ENCODE measurements at regions of chr9 and their contacts with region 1.

Region 1: DNA sequence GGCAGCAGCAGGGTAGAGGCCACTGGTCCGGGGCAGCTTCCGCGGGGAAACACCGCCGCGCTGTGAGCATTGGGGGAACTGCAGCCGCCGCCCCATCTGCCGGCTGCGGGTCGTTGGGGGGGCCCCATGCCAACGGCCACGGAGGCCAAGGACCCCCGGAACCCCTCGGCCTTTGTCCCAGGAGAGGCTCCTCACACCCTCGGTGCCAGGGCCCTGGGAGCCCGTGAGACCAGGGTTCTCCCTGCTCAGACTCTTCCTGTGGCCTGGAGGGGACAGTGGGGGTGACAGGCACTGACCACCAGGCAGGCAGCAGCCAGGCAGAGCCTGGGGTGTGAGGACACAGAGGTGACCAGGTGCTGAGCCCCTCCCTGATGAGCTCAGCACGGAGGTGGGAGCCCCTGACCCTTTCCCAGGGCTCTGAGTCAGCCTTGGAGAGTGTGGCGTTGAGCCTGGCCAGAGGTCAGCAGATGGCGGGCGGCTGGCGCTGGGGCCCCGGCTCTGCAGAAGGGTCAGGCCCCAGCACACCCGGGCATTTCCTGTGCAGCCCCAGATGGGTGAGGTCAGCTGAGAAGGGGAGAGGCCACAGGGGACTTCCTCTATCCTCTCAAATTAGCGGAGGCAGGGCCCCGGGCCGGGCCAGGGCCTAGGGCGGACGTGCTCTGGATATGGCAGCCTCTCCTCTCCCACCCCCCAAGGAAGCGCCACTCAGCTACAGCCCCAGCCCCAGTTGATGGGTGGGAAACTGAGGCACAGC is 17.9 kb upstream of the EGFL7 start:
- DNase-seq: peak; percentile 95
- H3K27ac ChIP-seq: 0 out of 2 replicates have a peak overlapping the region, but pooled peaks have one; percentile 4
- CTCF ChIP-seq: peak; percentile 100

Region 2: GRCh38 chr9:136482793-136483588 is 161.8 kb before region 1 on chr9 and contains the start of gene SEC16A:
- CTCF ChIA-PET with region 1: interaction called, 18 read pairs
- POLR2A ChIA-PET with region 1: no interaction called
- DNase-seq: peak; percentile 99
- H3K27ac ChIP-seq: peak within 1 kb of the TSS; percentile 98
- CTCF ChIP-seq: no peak

Region 3: DNA sequence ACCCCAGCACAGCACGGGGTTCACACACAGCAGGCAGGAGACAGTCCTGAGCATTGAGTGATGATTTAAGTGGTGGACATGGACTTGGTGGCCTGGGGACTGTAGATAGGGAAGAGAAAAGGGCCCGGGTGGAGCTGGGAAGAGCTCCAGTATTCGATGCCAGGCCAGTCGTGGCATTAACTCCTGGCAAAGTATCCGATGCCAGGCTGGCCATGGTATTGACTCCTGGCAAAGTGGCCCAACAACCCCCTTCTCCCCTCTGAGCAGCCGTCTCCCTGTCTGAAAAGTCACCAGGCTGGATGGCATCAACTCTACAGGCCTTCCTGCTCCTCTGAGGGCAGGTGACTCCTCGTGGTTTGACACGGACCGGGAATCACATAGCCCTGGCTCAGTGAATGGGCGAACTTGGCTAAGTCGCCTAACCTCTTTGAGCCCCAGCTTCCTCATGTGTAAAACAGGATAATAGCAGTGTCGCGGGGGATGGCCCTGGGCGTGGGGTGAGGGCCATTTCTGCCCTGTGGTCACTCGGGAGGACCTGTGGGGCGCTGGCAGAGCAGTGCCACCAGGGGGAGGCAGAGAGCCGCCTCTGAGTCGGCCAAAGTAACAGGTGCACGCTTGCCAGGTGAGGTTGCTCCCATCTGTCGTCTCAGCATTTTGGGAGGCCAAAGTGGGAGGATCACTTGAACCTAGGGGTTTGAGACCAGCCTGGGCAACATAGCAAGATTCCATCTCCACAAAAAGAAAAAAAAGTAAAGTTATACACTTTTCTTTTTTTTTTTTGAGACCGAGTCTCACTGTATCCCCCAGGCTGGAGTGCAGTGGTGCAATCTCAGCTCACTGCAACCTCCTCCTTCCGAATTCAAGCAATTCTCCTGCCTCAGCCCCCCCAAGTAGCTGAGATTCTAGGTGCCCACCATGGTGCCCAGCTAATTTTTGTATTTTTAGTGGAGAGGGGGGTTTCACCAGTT is 156.2 kb before region 1 on chr9:
- CTCF ChIA-PET with region 1: interaction called, 18 read pairs
- POLR2A ChIA-PET with region 1: no interaction called
- DNase-seq: peak; percentile 73
- H3K27ac ChIP-seq: 0 out of 2 replicates have a peak overlapping the region, but pooled peaks have one; percentile 2
- CTCF ChIP-seq: peak; percentile 100

Region 4: DNA sequence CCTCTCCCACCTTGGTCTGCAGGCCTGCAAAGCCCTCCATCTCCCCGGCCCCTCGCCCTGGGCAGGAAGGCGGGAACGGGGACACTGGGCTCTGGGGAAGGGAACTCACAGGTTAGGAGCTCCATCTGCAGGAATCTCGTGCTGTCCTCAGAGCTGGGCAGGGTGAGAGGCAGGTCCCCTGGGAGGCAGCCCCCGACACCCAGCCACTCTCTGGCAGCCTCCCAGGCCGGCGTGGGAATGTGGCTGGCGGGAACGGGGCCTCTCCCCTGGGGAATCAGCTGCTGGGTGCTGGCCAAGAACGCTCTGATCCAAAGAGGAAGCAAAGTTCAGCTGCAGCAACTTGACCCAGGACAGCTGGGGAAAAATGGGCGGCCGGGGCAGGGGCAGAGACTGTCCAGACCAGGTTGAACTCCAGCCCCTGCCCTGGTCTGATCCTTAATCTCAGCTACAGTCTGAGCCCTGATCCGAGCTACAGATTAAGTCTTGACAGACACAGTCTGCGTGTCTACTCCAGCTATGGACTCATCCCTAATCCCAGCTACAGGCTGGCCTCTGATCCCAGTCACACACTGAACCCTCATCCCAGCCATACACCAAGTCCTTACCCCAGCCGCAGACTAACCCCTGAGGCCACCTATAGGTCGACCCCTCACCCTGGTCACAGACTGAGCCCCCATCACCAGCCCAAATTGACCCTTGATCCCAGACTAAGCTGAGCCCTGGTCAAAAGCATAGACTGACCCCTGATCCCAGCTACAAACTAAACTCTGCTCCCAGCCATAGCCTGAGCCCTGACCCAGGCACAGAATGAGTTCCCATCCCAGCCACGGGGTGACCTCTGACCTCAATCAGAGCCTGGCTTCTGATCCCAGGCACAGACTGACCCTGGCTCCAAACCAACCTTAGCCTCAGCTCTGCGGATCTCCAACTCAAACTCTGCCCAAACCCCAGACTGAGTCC is 19.4 kb before region 1 on chr9:
- CTCF ChIA-PET with region 1: interaction called, 21 read pairs
- POLR2A ChIA-PET with region 1: no interaction called
- DNase-seq: peak; percentile 88
- H3K27ac ChIP-seq: peak overlapping the region; percentile 100
- CTCF ChIP-seq: peak; percentile 88

Region 5: GRCh38 chr9:136740971-136741882 is 96.5 kb after region 1 on chr9:
- CTCF ChIA-PET with region 1: no interaction called
- POLR2A ChIA-PET with region 1: no interaction called
- DNase-seq: no peak
- H3K27ac ChIP-seq: no peak overlapping the region
- CTCF ChIP-seq: no peak

Measured in RWPE1 (cell line).